ENCODE measurements at regions of chr19 and their contacts with region 1.

Region 1: GRCh38 chr19:54390942-54391577 is 24.2 kb upstream of the TTYH1 start:
- DNase-seq: peak; percentile 74
- ATAC-seq: no peak
- H3K4me3 Mint-ChIP-seq: no peak overlapping the region
- H3K27ac Mint-ChIP-seq: no peak overlapping the region
- H3K4me1 Mint-ChIP-seq: peaks cover 36% of the 10 kb centered on the region
- H3K27me3 Mint-ChIP-seq: peaks cover 15% of the 10 kb centered on the region

Region 2: DNA sequence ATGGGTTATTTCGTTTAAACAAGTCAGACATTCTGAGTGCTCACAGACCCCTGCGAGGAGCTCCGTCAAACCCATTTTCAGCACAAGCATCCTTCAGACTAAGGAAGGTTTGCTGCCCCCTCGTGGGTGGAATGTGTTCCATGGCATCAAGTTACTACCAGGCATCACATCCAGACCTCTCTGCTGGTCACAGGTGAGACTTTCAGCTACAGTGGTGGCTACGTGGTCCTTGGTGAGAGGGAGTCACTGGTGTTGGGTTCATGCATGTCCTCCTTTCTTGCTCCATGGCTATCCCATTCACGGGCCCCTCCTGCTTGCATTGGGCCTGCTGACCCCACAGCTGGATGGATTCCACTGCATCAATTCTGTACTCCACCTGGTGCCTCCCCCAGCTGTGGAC is 124.9 kb before region 1 on chr19:
- CTCF ChIA-PET with region 1: interaction called, 19 read pairs
- DNase-seq: peak; percentile 82
- ATAC-seq: peak; percentile 55
- H3K4me3 Mint-ChIP-seq: no peak overlapping the region
- H3K27ac Mint-ChIP-seq: no peak overlapping the region
- H3K4me1 Mint-ChIP-seq: no peaks in the 10 kb centered on the region
- H3K27me3 Mint-ChIP-seq: peaks cover 40% of the 10 kb centered on the region

Region 3: GRCh38 chr19:54281007-54281728 is 109.9 kb before region 1 on chr19 and contains the start of gene LILRB2:
- CTCF ChIA-PET with region 1: no interaction called
- DNase-seq: peak; percentile 26
- ATAC-seq: no peak
- H3K4me3 Mint-ChIP-seq: no peak within 1 kb of the TSS
- H3K27ac Mint-ChIP-seq: no peak within 1 kb of the TSS
- H3K4me1 Mint-ChIP-seq: no peaks in the 10 kb centered on the region
- H3K27me3 Mint-ChIP-seq: peaks cover 40% of the 10 kb centered on the region
- total RNA-seq, gene LILRB2: not detected

Region 4: GRCh38 chr19:54325194-54325621 is 65.9 kb before region 1 on chr19:
- CTCF ChIA-PET with region 1: interaction called, 135 read pairs
- DNase-seq: peak; percentile 64
- ATAC-seq: peak; percentile 53
- H3K4me3 Mint-ChIP-seq: no peak overlapping the region
- H3K27ac Mint-ChIP-seq: no peak overlapping the region
- H3K4me1 Mint-ChIP-seq: peaks cover 9% of the 10 kb centered on the region
- H3K27me3 Mint-ChIP-seq: peaks cover 14% of the 10 kb centered on the region

Region 5: DNA sequence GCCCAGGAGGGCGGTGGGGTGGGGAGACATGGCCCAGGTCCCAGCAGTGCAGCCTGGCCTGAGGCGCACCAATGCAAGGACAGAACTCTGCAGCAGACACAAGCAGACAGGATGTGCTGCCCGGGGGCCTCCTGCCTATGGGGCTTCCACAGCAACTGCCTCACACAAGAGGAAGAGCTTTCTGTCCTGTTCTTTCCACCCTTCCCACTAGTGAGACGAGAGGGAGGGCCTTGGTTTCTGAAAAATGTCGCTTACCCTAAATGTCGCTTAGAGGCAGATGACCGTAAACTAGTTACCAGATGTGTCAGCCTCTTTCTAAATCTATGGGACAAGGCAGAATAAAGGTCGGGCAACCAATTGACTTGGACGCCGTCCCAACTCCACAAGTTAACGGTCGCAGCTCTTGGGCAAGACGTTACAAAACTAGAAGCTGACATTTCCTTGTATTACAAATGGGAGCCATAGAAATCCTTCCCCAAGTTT is 26.2 kb before region 1 on chr19 and contains the start of gene LAIR1:
- CTCF ChIA-PET with region 1: interaction called, 40 read pairs
- DNase-seq: peak; percentile 77
- ATAC-seq: peak; percentile 77
- H3K4me3 Mint-ChIP-seq: peak within 1 kb of the TSS; percentile 94
- H3K27ac Mint-ChIP-seq: peak within 1 kb of the TSS; percentile 89
- H3K4me1 Mint-ChIP-seq: peaks cover 65% of the 10 kb centered on the region
- H3K27me3 Mint-ChIP-seq: peaks cover 17% of the 10 kb centered on the region
- total RNA-seq, gene LAIR1: 64.1 to 71.6 TPM

Region 6: GRCh38 chr19:54379187-54379678 is 11.8 kb before region 1 on chr19:
- CTCF ChIA-PET with region 1: interaction called, 16 read pairs
- DNase-seq: no peak
- ATAC-seq: no peak
- H3K4me3 Mint-ChIP-seq: no peak overlapping the region
- H3K27ac Mint-ChIP-seq: no peak overlapping the region
- H3K4me1 Mint-ChIP-seq: peaks cover 56% of the 10 kb centered on the region
- H3K27me3 Mint-ChIP-seq: peaks cover 43% of the 10 kb centered on the region

Measured in activated CD8-positive, alpha-beta memory T cell treated with anti-CD3 and anti-CD28 coated beads, Interleukin-2, amount 10 ng/mL, durations not matched to agents 7 days and 5 days (primary cell).